Psoas muscle (tissue), 8 donors: ENCODE measurements at regions of chr19 and their contacts with region 1.

Region 1: GRCh38 chr19:14136509-14137281 is at the start of gene ASF1B:
- DNase-seq: peak; percentile 99 to 100
- ATAC-seq: peak; percentile 85 to 89 (median 87)
- H3K4me3 ChIP-seq: peak within 1 kb of the TSS; percentile 79
- H3K27ac ChIP-seq: peak within 1 kb of the TSS; percentile 98
- H3K4me1 ChIP-seq: peaks cover 25% of the 10 kb centered on the region
- H3K27me3 ChIP-seq: no peaks in the 10 kb centered on the region
- CTCF ChIP-seq: peak; percentile 80
- total RNA-seq, gene ASF1B: 0.63 to 6.0 (median 0.84) TPM in 3 of 4 donors, not detected in the other

Region 2: DNA sequence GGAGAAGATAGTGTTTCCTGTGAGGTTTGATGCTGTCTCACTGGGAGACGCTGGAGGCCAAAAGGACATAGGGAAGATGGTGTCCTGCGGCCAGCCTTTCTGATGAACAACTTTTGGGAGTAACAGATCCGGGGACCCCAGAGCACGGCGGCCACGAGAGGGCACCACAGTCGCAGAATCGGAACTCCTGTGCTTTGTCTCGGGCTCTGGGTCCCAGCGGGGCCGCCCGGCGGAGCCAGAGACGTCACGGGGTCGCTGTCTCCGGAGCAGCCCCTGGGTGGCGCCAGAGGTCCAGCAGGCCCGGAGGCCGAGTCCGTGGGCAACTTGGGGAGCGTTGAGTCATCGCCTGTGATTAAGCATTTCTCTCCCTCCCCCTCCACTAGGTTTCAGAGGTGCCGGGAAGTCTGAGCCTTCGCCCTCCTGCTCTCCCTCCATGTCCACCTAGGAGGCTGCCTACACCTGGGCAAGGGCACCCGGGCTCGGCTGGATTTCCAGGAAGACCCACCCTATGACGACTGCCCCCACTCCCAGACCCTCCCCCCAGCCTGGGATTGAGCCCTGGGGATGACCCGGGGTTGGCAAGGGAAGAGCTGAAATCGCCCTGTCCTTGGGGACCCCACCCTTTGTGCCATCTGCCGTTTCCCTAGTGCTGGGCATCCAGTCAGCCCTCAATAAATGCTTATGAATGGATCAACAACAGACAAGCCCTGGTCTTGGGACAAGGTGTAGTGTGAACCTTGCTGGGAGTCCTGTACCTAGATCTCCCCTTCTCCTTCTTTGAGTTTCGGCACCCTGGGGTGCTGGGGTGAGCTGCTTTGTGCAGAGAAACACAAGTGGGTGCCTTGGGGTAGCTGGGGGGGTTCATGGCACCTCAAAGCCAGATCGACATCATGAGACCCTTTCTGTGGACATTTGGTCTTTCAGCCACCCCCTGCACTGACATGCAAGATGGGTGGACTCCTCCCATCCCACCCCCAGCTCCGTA is 256.3 kb before region 1 on chr19:
- intact Hi-C with region 1: loop called in 1 of 2 experiments (anchors 5 kb)
- DNase-seq: peak; percentile 99
- ATAC-seq: peak; percentile 98 to 100 (median 98)
- H3K4me3 ChIP-seq: peak overlapping the region; percentile 53
- H3K27ac ChIP-seq: peak overlapping the region; percentile 83
- H3K4me1 ChIP-seq: peaks cover 15% of the 10 kb centered on the region
- H3K27me3 ChIP-seq: no peaks in the 10 kb centered on the region
- CTCF ChIP-seq: peak; percentile 98

Region 3: GRCh38 chr19:14073261-14073924 is 63.3 kb before region 1 on chr19:
- intact Hi-C with region 1: loop called in 1 of 2 experiments (anchors 2 kb)
- DNase-seq: peak; percentile 83 to 89
- ATAC-seq: peak; percentile 45 to 58 (median 56)
- H3K4me3 ChIP-seq: peak overlapping the region; percentile 83
- H3K27ac ChIP-seq: peak overlapping the region; percentile 78
- H3K4me1 ChIP-seq: peaks cover 20% of the 10 kb centered on the region
- H3K27me3 ChIP-seq: no peaks in the 10 kb centered on the region
- CTCF ChIP-seq: peak; percentile 75

Region 4: GRCh38 chr19:14091813-14092462 is 44.8 kb before region 1 on chr19:
- intact Hi-C with region 1: loop called in 1 of 2 experiments (anchors 1 kb)
- DNase-seq: no peak
- ATAC-seq: peak in 3 of 4 donors; percentile 1 to 8 (median 4)
- H3K4me3 ChIP-seq: peak overlapping the region; percentile 89
- H3K27ac ChIP-seq: peak overlapping the region; percentile 89
- H3K4me1 ChIP-seq: peaks cover 6% of the 10 kb centered on the region
- H3K27me3 ChIP-seq: no peaks in the 10 kb centered on the region
- CTCF ChIP-seq: no peak

Region 5: GRCh38 chr19:14117668-14118164 is 19.0 kb before region 1 on chr19 and contains the start of gene PRKACA:
- intact Hi-C with region 1: loop called in 1 of 2 experiments (anchors 2 kb)
- DNase-seq: peak; percentile 100
- ATAC-seq: peak; percentile 72 to 86 (median 78)
- H3K4me3 ChIP-seq: peak within 1 kb of the TSS; percentile 90
- H3K27ac ChIP-seq: peak within 1 kb of the TSS; percentile 100
- H3K4me1 ChIP-seq: peaks cover 59% of the 10 kb centered on the region
- H3K27me3 ChIP-seq: no peaks in the 10 kb centered on the region
- CTCF ChIP-seq: no peak
- total RNA-seq, gene PRKACA: 209 to 509 (median 312) TPM

Region 6: GRCh38 chr19:14183741-14184350 is 47.2 kb after region 1 on chr19:
- intact Hi-C with region 1: no loop called
- DNase-seq: no peak
- ATAC-seq: no peak
- H3K4me3 ChIP-seq: no peak overlapping the region
- H3K27ac ChIP-seq: no peak overlapping the region
- H3K4me1 ChIP-seq: no peaks in the 10 kb centered on the region
- H3K27me3 ChIP-seq: no peaks in the 10 kb centered on the region
- CTCF ChIP-seq: no peak

Region 7: GRCh38 chr19:14248578-14249011 is 111.9 kb after region 1 on chr19:
- intact Hi-C with region 1: no loop called
- DNase-seq: no peak
- ATAC-seq: no peak
- H3K4me3 ChIP-seq: peak overlapping the region; percentile 52
- H3K27ac ChIP-seq: no peak overlapping the region
- H3K4me1 ChIP-seq: no peaks in the 10 kb centered on the region
- H3K27me3 ChIP-seq: peaks cover 0 to 33% (median 4%) of the 10 kb centered on the region in 3 donors
- CTCF ChIP-seq: no peak

Region 8: GRCh38 chr19:14405758-14406644 is 269.3 kb after region 1 on chr19:
- intact Hi-C with region 1: loop called in 1 of 2 experiments (anchors 5 kb)
- DNase-seq: peak; percentile 88 to 94
- ATAC-seq: peak; percentile 86 to 92 (median 90)
- H3K4me3 ChIP-seq: peak overlapping the region; percentile 52
- H3K27ac ChIP-seq: peak overlapping the region; percentile 66
- H3K4me1 ChIP-seq: peaks cover 6% of the 10 kb centered on the region
- H3K27me3 ChIP-seq: no peaks in the 10 kb centered on the region
- CTCF ChIP-seq: peak; percentile 89